ENCODE measurements at regions of chr19 and their contacts with region 1.

Region 1: DNA sequence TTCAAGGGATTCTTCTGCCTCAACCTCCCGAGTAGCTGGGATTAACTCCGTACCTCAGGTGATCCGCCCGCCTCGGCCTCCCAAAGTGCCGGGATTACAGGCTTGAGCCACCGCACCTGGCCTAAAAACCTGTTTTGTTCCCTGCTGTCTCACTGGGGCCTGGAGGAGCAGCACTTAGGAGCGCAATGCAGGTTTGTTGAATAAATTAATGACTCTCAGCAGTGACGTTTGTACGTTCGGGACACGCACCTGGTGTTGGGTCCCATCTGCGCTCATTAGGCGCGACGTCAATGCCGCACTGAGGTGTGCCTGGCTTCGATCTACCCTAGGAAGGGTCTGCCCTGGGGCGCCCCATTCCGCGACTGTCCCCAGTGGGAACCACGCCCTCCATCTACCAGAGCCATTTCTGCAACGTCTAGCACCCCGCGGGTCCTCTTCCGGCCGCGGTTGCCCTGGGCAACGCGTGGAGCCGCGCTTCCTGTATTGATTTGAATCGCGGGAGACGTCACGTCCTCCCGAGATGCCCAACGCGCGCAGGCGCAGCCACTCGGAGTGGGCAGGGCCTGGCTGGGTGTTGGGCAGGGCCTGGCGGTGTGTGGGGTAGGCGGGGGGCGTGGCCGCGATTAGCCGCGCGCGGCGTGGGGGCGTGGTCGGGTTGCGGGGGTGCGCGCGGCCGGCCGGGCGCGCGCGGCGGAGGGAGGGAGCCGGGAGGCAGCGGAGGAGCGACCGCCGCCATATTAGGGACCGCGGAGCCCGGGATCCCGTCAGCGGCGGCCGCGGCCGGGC is at the start of gene FZR1:
- DNase-seq: peak; percentile 100
- ATAC-seq: peak; percentile 92
- H3K4me3 Mint-ChIP-seq: peak within 1 kb of the TSS; percentile 84
- H3K27ac Mint-ChIP-seq: peak within 1 kb of the TSS; percentile 86
- H3K4me1 Mint-ChIP-seq: peaks cover 45% of the 10 kb centered on the region
- H3K27me3 Mint-ChIP-seq: no peaks in the 10 kb centered on the region
- total RNA-seq, gene FZR1: 40.8 to 50.7 TPM

Region 2: DNA sequence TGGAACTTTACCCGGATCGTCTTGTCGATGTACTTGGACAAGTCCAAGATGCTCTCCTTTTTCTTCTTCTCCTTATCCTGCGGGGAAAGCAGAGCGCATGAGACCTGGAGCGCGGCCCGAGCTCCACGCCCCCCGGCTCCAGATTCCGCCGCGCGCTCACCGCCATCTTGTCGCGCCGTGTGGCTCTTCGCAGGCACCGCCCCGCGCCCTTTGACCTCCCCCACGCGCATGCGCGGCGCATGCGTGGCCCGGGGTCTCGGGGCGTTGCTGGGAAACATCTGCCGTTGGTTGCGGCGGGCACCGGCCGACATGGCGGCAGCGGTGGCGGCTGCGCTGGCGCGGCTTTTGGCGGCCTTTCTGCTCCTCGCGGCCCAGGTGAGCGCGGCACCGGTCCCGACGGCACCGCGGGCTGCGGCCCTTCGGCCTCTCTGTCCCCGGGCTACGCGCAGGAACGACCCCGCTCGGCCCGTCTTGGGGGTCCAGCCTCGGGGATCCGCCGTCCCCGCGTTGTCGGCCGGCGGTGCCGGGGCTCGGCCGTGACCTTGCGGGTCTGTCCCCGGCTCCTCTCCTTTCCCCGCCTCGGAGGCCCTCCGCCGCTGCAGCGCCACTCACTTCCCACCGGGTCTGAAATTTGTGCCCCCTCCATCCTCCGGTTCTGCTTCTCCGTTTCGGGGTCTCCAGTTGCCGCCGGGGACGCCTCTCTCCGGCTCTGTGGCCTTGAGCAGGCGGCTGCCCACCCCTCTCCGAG is 1177.2 kb before region 1 on chr19 and contains the starts of genes LSM7 and SPPL2B:
- CTCF ChIA-PET with region 1: no interaction called
- POLR2A ChIA-PET with region 1: no interaction called
- intact Hi-C with region 1: loop called in 1 of 2 experiments (anchors 5 kb)
- DNase-seq: peak; percentile 95
- ATAC-seq: peak; percentile 78
- H3K4me3 Mint-ChIP-seq: peak within 1 kb of the TSS; percentile 98
- H3K27ac Mint-ChIP-seq: peak within 1 kb of the TSS; percentile 99
- H3K4me1 Mint-ChIP-seq: peaks cover 69% of the 10 kb centered on the region
- H3K27me3 Mint-ChIP-seq: no peaks in the 10 kb centered on the region
- total RNA-seq, gene LSM7: 113 to 134 TPM
- total RNA-seq, gene SPPL2B: 37.7 to 48.5 TPM

Region 3: DNA sequence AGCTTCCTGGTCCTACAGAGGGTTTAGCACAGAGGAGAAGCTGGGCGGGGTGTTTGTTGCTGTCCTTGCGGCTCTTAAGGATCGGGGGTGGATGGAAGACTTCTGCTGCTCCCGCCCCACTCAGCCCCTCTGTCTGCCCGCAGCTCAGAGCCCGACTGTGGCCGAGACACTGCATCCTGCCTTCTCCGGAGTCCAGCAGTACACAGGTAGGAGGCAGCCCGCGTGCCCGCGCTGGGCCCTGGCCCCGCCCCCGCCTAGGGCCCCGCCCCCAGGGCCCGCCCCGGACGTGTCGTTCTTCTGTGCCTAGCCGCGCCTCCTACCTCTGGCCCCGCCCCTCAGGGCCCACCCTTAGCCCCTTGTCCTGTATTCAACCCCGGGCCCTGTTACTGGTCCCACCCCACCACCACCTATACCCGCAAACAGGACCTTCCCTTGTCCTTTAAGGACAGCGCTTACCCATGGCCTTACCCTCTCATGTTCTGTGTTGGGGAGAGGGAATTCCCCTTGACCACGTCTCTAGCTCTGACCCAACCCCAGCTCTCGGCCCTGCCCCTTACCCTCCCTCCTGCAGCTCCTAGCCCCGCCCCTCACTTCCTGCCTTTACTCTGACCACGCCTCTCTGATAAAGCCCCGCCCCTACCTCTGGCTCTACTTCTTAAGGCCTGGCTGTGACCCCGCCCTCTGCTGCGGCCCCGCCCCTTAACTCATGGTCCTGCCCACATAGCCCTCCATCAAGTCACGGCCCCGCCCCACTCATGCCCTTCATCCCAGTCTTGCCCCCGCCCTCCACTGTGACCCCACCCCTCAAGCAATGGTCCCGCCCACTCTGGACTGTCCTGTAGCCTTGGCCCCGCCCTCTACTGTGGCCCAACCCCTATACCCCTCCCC is 220.8 kb before region 1 on chr19:
- CTCF ChIA-PET with region 1: no interaction called
- POLR2A ChIA-PET with region 1: no interaction called
- intact Hi-C with region 1: loop called in 1 of 2 experiments (anchors 1 kb)
- DNase-seq: peak; percentile 94
- ATAC-seq: peak; percentile 91
- H3K4me3 Mint-ChIP-seq: peak overlapping the region; percentile 51
- H3K27ac Mint-ChIP-seq: no peak overlapping the region
- H3K4me1 Mint-ChIP-seq: peaks cover 12% of the 10 kb centered on the region
- H3K27me3 Mint-ChIP-seq: peaks cover 19% of the 10 kb centered on the region

Region 4: GRCh38 chr19:3557461-3558248 is 51.9 kb after region 1 on chr19 and contains the start of gene MFSD12:
- CTCF ChIA-PET with region 1: no interaction called
- POLR2A ChIA-PET with region 1: no interaction called
- intact Hi-C with region 1: loop called (anchors 1 to 5 kb)
- DNase-seq: peak; percentile 97
- ATAC-seq: peak; percentile 89
- H3K4me3 Mint-ChIP-seq: peak within 1 kb of the TSS; percentile 96
- H3K27ac Mint-ChIP-seq: peak within 1 kb of the TSS; percentile 92
- H3K4me1 Mint-ChIP-seq: peaks cover 36% of the 10 kb centered on the region
- H3K27me3 Mint-ChIP-seq: no peaks in the 10 kb centered on the region
- total RNA-seq, gene MFSD12: 44.7 to 46.7 TPM

Region 5: DNA sequence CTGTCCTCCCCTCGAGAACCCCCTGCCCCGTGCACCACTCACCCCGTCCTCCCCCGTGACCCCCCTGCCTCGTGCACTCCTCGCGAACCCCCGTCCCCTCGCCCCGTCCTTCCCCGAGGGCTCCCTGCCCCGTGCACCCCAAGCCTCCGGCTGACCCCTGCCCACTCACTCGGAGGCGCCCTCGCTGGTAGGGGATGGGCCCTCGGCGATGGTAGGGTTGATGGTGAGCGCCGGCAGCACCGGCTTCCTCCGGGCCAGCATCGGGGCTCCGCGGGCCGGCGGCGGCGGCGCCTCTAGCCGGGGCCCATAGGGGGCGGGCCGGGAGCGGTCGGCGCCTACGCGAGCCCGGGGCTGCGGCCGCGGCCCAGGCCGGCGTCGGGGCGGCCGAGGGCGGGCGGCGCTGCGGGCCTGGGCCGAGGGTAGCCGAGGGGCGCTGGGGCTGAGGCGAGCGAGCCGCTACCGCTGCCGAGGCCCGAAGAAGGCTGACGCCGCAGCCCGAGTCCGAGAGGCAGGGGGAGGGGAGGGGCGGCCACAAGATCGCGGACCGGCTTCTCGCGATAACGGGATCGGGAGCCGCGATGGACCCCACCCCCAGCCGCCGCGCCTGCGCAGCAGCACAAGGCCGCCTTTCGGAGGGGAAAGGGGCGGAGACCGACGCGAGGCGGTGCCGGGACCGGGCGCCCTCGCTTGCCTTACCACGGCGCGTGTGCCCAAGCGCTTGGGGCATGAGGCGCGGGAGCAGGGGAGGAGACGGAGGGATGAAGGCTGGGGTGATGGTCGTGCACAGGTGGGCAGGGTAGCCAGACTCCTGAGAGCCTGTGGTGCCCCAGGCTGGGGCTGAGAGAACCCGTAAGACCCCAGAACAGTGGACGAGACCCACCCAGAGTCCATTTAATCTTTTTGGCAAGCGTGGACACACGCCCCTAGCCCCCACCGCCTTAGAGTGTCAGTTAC is 618.1 kb after region 1 on chr19 and contains the start of gene MAP2K2:
- CTCF ChIA-PET with region 1: no interaction called
- POLR2A ChIA-PET with region 1: no interaction called
- intact Hi-C with region 1: loop called in 1 of 2 experiments (anchors 10 kb)
- DNase-seq: peak; percentile 98
- ATAC-seq: peak; percentile 96
- H3K4me3 Mint-ChIP-seq: peak within 1 kb of the TSS; percentile 97
- H3K27ac Mint-ChIP-seq: peak within 1 kb of the TSS; percentile 92
- H3K4me1 Mint-ChIP-seq: peaks cover 18% of the 10 kb centered on the region
- H3K27me3 Mint-ChIP-seq: no peaks in the 10 kb centered on the region
- total RNA-seq, gene MAP2K2: 108 to 133 TPM